ENCODE measurements at regions of chr16 and their contacts with region 1.

Region 1: GRCh38 chr16:65671-66137 is 6.7 kb downstream of the RHBDF1 start:
- DNase-seq: peak; percentile 71 to 91 (median 83)
- ATAC-seq: peak; percentile 99
- H3K4me3 ChIP-seq: no peak overlapping the region
- H3K4me3 Mint-ChIP-seq: no peak overlapping the region
- H3K27ac ChIP-seq: no peak overlapping the region
- H3K27ac Mint-ChIP-seq: no peak overlapping the region
- H3K4me1 ChIP-seq: no peaks in the 10 kb centered on the region
- H3K4me1 Mint-ChIP-seq: peaks cover 3% of the 10 kb centered on the region
- H3K27me3 ChIP-seq: no peaks in the 10 kb centered on the region
- H3K27me3 Mint-ChIP-seq: peaks cover 11% of the 10 kb centered on the region
- CTCF ChIP-seq: peak; percentile 91

Region 2: GRCh38 chr16:53346-54236 is 12.1 kb before region 1 on chr16 and contains the starts of genes POLR3K and SNRNP25:
- CTCF ChIA-PET with region 1: interaction called, 14 read pairs
- POLR2A ChIA-PET with region 1: interaction called, 3 read pairs
- intact Hi-C with region 1: no loop called
- DNase-seq: peak; percentile 96 to 99 (median 98)
- ATAC-seq: peak; percentile 97
- H3K4me3 ChIP-seq: peak within 1 kb of the TSS; percentile 91 to 98
- H3K4me3 Mint-ChIP-seq: peak within 1 kb of the TSS; percentile 97
- H3K27ac ChIP-seq: peak within 1 kb of the TSS; percentile 60
- H3K27ac Mint-ChIP-seq: peak within 1 kb of the TSS; percentile 85
- H3K4me1 ChIP-seq: peaks cover 21% of the 10 kb centered on the region
- H3K4me1 Mint-ChIP-seq: peaks cover 28% of the 10 kb centered on the region
- H3K27me3 ChIP-seq: no peaks in the 10 kb centered on the region
- H3K27me3 Mint-ChIP-seq: no peaks in the 10 kb centered on the region
- CTCF ChIP-seq: no peak
- total RNA-seq, gene POLR3K: 4.6 to 5.5 TPM
- total RNA-seq, gene SNRNP25: 4.9 to 5.4 TPM

Region 3: GRCh38 chr16:84718-85406 is 19.2 kb after region 1 on chr16:
- CTCF ChIA-PET with region 1: interaction called, 24 read pairs
- POLR2A ChIA-PET with region 1: no interaction called
- intact Hi-C with region 1: no loop called
- DNase-seq: peak in 8 of 9 experiments; percentile 22 to 64 (median 44)
- ATAC-seq: peak; percentile 80
- H3K4me3 ChIP-seq: no peak overlapping the region
- H3K4me3 Mint-ChIP-seq: no peak overlapping the region
- H3K27ac ChIP-seq: peak overlapping the region; percentile 22 to 66
- H3K27ac Mint-ChIP-seq: peak overlapping the region; percentile 85
- H3K4me1 ChIP-seq: peaks cover 24% of the 10 kb centered on the region
- H3K4me1 Mint-ChIP-seq: peaks cover 25% of the 10 kb centered on the region
- H3K27me3 ChIP-seq: no peaks in the 10 kb centered on the region
- H3K27me3 Mint-ChIP-seq: no peaks in the 10 kb centered on the region
- CTCF ChIP-seq: no peak

Region 4: DNA sequence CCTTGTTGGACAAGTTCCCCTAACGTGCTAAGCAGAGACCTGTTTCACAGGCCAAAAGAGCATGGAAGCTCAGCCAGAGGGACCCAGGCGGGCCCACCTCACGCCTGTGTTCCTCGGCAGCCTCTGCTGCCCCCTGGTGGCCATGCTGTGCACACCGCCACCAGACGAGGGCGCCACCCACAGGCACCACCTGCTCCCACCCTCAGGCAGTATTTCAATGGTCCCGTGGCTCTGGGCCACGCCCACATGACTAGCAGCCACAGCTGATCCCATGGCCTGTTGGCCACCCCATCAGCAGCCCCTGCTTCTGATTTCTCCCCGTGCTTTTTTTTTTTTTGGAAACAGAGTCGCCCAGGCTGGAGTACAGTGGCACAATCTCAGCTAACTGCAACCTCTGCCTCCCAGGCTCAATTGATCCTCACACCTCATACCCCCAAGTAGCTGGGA is 31.3 kb after region 1 on chr16:
- CTCF ChIA-PET with region 1: interaction called, 309 read pairs
- POLR2A ChIA-PET with region 1: interaction called, 12 read pairs
- intact Hi-C with region 1: loop called (anchors 1 kb)
- DNase-seq: peak; percentile 82 to 94 (median 90)
- ATAC-seq: peak; percentile 100
- H3K4me3 ChIP-seq: no peak overlapping the region
- H3K4me3 Mint-ChIP-seq: no peak overlapping the region
- H3K27ac ChIP-seq: no peak overlapping the region
- H3K27ac Mint-ChIP-seq: no peak overlapping the region
- H3K4me1 ChIP-seq: no peaks in the 10 kb centered on the region
- H3K4me1 Mint-ChIP-seq: peaks cover 5% of the 10 kb centered on the region
- H3K27me3 ChIP-seq: no peaks in the 10 kb centered on the region
- H3K27me3 Mint-ChIP-seq: no peaks in the 10 kb centered on the region
- CTCF ChIP-seq: peak; percentile 97

Region 5: GRCh38 chr16:117379-118365 is 52.0 kb after region 1 on chr16:
- CTCF ChIA-PET with region 1: interaction called, 16 read pairs
- POLR2A ChIA-PET with region 1: no interaction called
- intact Hi-C with region 1: no loop called
- DNase-seq: peak; percentile 33 to 80 (median 73)
- ATAC-seq: peak; percentile 89
- H3K4me3 ChIP-seq: no peak overlapping the region
- H3K4me3 Mint-ChIP-seq: no peak overlapping the region
- H3K27ac ChIP-seq: no peak overlapping the region
- H3K27ac Mint-ChIP-seq: no peak overlapping the region
- H3K4me1 ChIP-seq: peaks cover 3% of the 10 kb centered on the region
- H3K4me1 Mint-ChIP-seq: peaks cover 6% of the 10 kb centered on the region
- H3K27me3 ChIP-seq: no peaks in the 10 kb centered on the region
- H3K27me3 Mint-ChIP-seq: no peaks in the 10 kb centered on the region
- CTCF ChIP-seq: peak; percentile 81

Region 6: DNA sequence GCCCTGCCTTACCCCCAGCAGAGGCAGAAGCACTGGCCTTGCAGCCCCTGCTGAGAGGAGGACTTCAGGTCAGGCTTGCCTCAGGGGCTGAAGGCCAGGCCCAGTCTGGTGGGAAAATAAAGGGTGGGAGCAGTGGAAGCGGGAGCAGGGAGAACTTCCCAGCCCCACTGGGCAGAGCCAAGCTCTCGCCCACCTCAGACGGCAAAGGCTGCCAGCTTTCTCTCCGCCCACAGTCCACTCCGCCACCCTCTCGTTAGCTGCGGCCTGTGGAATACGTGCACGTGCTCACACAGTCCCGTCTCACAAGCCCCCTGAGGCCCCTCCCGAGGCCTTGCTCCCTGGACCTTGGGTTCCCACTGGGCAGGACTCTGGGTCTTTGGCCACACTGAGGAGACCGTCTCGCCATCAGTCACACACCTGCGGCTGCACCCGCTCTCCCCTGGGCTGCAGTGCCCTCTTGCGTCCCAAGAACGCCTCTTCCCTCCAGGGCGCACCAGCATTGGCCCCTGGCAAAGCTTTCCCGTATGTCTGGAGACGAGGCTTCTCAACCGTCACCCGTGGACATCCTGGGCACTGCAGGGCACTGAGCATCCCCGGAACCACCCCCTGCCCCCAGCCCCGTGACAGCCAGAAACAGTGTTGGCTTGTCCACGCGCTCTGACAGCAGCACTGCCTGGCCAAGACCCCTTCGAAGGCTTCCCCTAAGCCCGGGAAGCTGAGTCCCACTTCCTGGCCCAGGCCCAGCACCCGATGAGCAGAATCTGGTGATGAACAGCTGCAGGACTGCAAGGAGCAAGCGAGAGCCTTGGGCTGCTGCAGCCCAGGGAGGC is 296.4 kb after region 1 on chr16:
- CTCF ChIA-PET with region 1: interaction called, 22 read pairs
- POLR2A ChIA-PET with region 1: no interaction called
- intact Hi-C with region 1: loop called in 1 of 2 experiments (anchors 1 kb)
- DNase-seq: peak; percentile 51 to 86 (median 77)
- ATAC-seq: peak; percentile 96
- H3K4me3 ChIP-seq: peak overlapping the region in 1 of 2 experiments; percentile 37
- H3K4me3 Mint-ChIP-seq: peak overlapping the region; percentile 26
- H3K27ac ChIP-seq: no peak overlapping the region
- H3K27ac Mint-ChIP-seq: peak overlapping the region; percentile 45
- H3K4me1 ChIP-seq: peaks cover 9% of the 10 kb centered on the region
- H3K4me1 Mint-ChIP-seq: peaks cover 8% of the 10 kb centered on the region
- H3K27me3 ChIP-seq: no peaks in the 10 kb centered on the region
- H3K27me3 Mint-ChIP-seq: no peaks in the 10 kb centered on the region
- CTCF ChIP-seq: peak; percentile 80

Measured in CD8-positive, alpha-beta T cell (primary cell).